Right cardiac atrium (tissue), 5 donors: ENCODE measurements at regions of chr18 and their contacts with region 1.

Region 1: DNA sequence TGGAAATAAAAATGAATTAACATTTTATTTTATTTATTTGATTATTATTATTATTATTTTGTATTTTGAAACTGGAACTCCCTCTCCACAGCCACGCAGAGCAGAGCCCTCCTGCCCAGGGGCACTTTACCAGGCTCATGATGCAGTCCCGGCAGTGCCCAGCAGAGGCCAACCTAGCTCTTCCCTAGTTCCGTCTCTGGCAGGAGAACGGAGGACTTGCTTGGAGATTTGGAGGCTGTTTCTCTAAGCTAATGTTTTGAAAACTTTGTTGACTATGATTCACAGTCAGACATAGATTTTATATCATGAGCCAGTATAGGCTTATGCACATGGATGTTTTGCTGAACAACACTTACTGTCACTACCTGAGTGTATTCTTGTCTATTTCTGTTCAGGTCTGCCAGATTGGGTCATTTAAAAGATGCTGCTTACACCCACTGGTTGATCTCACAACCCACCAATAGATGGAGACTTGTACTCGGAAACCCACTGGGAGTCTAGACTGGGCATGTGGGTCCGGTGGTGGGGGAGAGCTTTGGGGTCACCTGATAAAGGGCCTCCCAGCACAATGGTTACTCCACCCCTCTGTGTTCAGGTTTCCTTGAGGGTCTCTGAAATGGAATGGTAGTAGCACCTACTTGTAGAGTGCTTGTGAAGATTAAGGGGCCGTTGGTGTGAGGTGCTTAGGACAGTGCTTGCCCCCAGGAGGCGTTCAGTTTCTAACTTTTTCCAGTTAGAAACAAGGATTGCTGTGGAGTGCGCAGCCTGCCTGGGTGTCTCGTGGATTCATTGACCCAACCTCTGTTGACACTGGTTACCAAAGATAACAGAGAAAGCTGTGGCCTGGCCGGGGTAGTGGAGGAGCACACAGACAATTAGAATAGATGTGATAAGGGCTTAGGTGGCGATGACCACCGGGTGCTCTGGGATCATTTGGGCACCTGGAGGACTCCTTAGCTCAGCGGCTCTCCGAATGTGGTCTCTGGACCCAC is 177.3 kb downstream of the HAUS1 start:
- DNase-seq: peak; percentile 66 to 87 (median 85)
- ATAC-seq: peak; percentile 82 to 87
- H3K4me3 ChIP-seq: no peak overlapping the region
- H3K27ac ChIP-seq: no peak overlapping the region
- H3K4me1 ChIP-seq: peaks cover 8% of the 10 kb centered on the region
- H3K27me3 ChIP-seq: no peaks in the 10 kb centered on the region

Region 2: GRCh38 chr18:46481048-46481846 is 199.8 kb after region 1 on chr18:
- intact Hi-C with region 1: loop called in 2 of 4 experiments (anchors 5 to 10 kb)
- DNase-seq: peak in 2 of 3 donors; percentile 30 to 58
- ATAC-seq: peak in 1 of 2 donors; percentile 41
- H3K4me3 ChIP-seq: no peak overlapping the region
- H3K27ac ChIP-seq: no peak overlapping the region
- H3K4me1 ChIP-seq: peaks cover 2% of the 10 kb centered on the region
- H3K27me3 ChIP-seq: no peaks in the 10 kb centered on the region